Heart right ventricle (tissue), 16 donors: ENCODE measurements at regions of chrX and their contacts with region 1.

Region 1: DNA sequence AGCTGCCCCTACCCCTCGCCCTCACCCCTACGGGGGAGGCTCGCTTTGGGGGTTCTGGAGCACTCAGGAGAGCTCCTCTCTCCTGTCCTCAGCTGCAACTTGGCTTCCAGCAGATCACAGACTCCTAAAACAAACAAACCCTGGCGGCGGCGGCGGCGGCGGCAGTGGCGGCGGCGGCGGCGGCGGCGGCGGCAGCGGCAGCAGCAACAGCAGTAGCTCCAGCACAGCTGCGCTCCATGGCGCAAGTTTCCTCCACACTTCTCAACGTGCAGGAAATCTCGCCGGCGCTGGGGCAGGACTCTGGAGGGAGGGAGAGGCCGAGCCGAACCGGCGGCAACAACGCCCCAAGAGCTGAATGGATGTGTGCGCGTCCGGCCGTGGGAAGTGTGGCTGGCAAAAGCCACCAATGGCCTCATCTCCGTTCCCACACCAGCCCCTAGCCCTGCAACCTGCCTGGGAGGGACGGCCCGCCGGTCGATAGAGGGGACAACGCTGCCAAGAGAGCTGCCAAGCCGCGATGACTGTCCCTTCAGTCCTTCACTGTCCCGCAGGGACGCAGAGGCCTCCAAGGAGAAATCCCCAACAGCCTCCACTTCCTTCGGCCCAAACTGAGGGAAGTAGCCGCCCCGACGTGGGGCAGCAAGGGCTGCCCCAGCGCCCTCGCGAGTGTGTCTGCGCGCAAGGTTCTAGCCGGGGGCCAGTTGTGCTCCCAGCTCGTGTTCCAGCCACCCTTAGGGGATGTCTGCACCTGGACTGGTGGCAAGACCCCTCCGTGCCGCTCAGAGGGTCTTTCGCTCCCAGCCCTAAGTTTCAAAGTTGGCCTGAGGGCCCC is 783 bp downstream of the SHROOM4 start:
- DNase-seq: peak; percentile 45 to 46
- ATAC-seq: peak; percentile 56 to 85 (median 74)
- H3K4me3 ChIP-seq: peak overlapping the region; percentile 37 to 72 (median 62)
- H3K27ac ChIP-seq: peak overlapping the region; percentile 54 to 86 (median 82)
- H3K4me1 ChIP-seq: no peaks in the 10 kb centered on the region
- H3K27me3 ChIP-seq: peaks cover 0 to 61% (median 0%) of the 10 kb centered on the region in 7 donors
- CTCF ChIP-seq: no peak

Region 2: DNA sequence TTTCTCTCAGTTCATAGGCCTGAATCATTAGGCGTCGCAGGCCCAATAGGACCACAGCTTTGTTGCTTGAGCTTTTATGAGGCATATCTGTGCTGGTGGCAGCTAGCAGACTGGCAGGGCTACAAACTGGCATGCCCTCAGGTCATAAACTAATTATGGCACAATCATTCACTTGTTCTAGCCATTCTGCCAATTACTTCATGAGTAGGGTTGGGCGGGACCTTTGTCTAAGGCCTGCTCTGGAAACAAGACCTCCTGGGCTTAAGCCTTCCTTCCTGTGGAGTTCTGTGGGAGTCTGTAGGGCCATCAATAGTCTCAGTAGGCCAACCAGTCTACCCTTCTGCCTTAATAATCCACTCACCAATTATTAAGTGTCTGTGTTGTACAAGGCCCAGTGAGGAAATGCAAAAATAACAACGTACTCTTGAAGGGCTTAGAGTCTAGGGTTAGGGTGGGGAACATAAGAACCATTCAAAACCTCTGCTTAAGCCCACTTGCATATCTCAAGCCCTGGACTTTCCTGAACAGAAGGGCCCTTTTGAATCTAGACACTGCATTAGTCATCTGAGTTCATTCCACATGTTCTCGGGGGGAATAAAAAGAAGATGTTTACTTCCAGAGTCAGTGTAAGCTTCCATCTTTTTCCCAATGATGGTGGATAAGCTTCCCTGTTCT is 43.7 kb before region 1 on chrX:
- intact Hi-C with region 1: loop called in 1 of 10 experiments (anchors 10 kb)
- DNase-seq: peak; percentile 7 to 12
- ATAC-seq: peak in 6 of 8 donors; percentile 40 to 90 (median 68)
- H3K4me3 ChIP-seq: no peak overlapping the region
- H3K27ac ChIP-seq: peak overlapping the region in 2 of 10 donors; percentile 22 to 44
- H3K4me1 ChIP-seq: peaks cover 0 to 30% (median 10%) of the 10 kb centered on the region in 9 donors
- H3K27me3 ChIP-seq: peaks cover 0 to 41% (median 0%) of the 10 kb centered on the region in 7 donors
- CTCF ChIP-seq: no peak

Region 3: GRCh38 chrX:50978920-50979682 is 165.9 kb after region 1 on chrX:
- intact Hi-C with region 1: no loop called
- DNase-seq: no peak
- ATAC-seq: peak in 1 of 8 donors; percentile 34
- H3K4me3 ChIP-seq: no peak overlapping the region
- H3K27ac ChIP-seq: no peak overlapping the region
- H3K4me1 ChIP-seq: no peaks in the 10 kb centered on the region
- H3K27me3 ChIP-seq: peaks cover 0 to 73% (median 0%) of the 10 kb centered on the region in 7 donors
- CTCF ChIP-seq: peak in 1 of 9 donors; percentile 14